Activated CD4-positive, alpha-beta memory T cell treated with anti-CD3 and anti-CD28 coated beads for 36 hours (primary cell): ENCODE measurements at regions of chr1 and their contacts with region 1.

Region 1: GRCh38 chr1:160342953-160343869 is at the starts of genes COPA and NCSTN:
- DNase-seq: peak; percentile 95
- H3K4me3 Mint-ChIP-seq: peak within 1 kb of the TSS; percentile 93
- H3K27ac Mint-ChIP-seq: peak within 1 kb of the TSS; percentile 93
- H3K4me1 Mint-ChIP-seq: peaks cover 41% of the 10 kb centered on the region
- H3K27me3 Mint-ChIP-seq: no peaks in the 10 kb centered on the region
- total RNA-seq, gene COPA: 132 TPM
- total RNA-seq, gene NCSTN: 39.8 to 42.6 TPM

Region 2: GRCh38 chr1:160161965-160162705 is 181.1 kb before region 1 on chr1:
- CTCF ChIA-PET with region 1: no interaction called
- POLR2A ChIA-PET with region 1: no interaction called
- intact Hi-C with region 1: no loop called
- DNase-seq: no peak
- H3K4me3 Mint-ChIP-seq: no peak overlapping the region
- H3K27ac Mint-ChIP-seq: no peak overlapping the region
- H3K4me1 Mint-ChIP-seq: peaks cover 6% of the 10 kb centered on the region
- H3K27me3 Mint-ChIP-seq: peaks cover 5% of the 10 kb centered on the region

Region 3: GRCh38 chr1:160205242-160206035 is 137.8 kb before region 1 on chr1 and contains the start of gene PEA15:
- CTCF ChIA-PET with region 1: no interaction called
- POLR2A ChIA-PET with region 1: no interaction called
- intact Hi-C with region 1: loop called (anchors 2 kb)
- DNase-seq: peak; percentile 80
- H3K4me3 Mint-ChIP-seq: peak within 1 kb of the TSS; percentile 87
- H3K27ac Mint-ChIP-seq: peak within 1 kb of the TSS; percentile 82
- H3K4me1 Mint-ChIP-seq: peaks cover 54% of the 10 kb centered on the region
- H3K27me3 Mint-ChIP-seq: no peaks in the 10 kb centered on the region
- total RNA-seq, gene PEA15: 51.8 to 51.9 TPM

Region 4: GRCh38 chr1:160284782-160285344 is 58.3 kb before region 1 on chr1 and contains the start of gene PEX19:
- CTCF ChIA-PET with region 1: interaction called, 3 read pairs
- POLR2A ChIA-PET with region 1: interaction called, 6 read pairs
- intact Hi-C with region 1: loop called (anchors 5 kb)
- DNase-seq: peak; percentile 97
- H3K4me3 Mint-ChIP-seq: peak within 1 kb of the TSS; percentile 96
- H3K27ac Mint-ChIP-seq: peak within 1 kb of the TSS; percentile 90
- H3K4me1 Mint-ChIP-seq: peaks cover 20% of the 10 kb centered on the region
- H3K27me3 Mint-ChIP-seq: no peaks in the 10 kb centered on the region
- total RNA-seq, gene PEX19: 50.0 to 61.1 TPM

Region 5: GRCh38 chr1:160503087-160503486 is 159.9 kb after region 1 on chr1:
- CTCF ChIA-PET with region 1: no interaction called
- POLR2A ChIA-PET with region 1: no interaction called
- intact Hi-C with region 1: no loop called
- DNase-seq: no peak
- H3K4me3 Mint-ChIP-seq: no peak overlapping the region
- H3K27ac Mint-ChIP-seq: no peak overlapping the region
- H3K4me1 Mint-ChIP-seq: peaks cover 68% of the 10 kb centered on the region
- H3K27me3 Mint-ChIP-seq: no peaks in the 10 kb centered on the region